Activated T-helper 1 cell treated with anti-CD3 and anti-CD28 coated beads, Interleukin-12 subunit alpha, Interleukin-12 subunit beta, Interleukin-2, Interleukin-4 antibody, amounts not matched to agents 30 ng/mL and 10 ng/mL and 1 ng/mL, durations not matched to agents 14 hours and 24 hours and 36 hours (primary cell): ENCODE measurements at regions of chr4 and their contacts with region 1.

Region 1: GRCh38 chr4:52028969-52029368 is 8.8 kb upstream of the LRRC66 start:
- DNase-seq: no peak
- H3K4me3 Mint-ChIP-seq: no peak overlapping the region
- H3K27ac Mint-ChIP-seq: no peak overlapping the region
- H3K4me1 Mint-ChIP-seq: no peaks in the 10 kb centered on the region
- H3K27me3 Mint-ChIP-seq: no peaks in the 10 kb centered on the region

Region 2: GRCh38 chr4:51831133-51831532 is 197.8 kb before region 1 on chr4:
- intact Hi-C with region 1: loop called (anchors 1 kb)
- DNase-seq: peak; percentile 26
- H3K4me3 Mint-ChIP-seq: no peak overlapping the region
- H3K27ac Mint-ChIP-seq: no peak overlapping the region
- H3K4me1 Mint-ChIP-seq: no peaks in the 10 kb centered on the region
- H3K27me3 Mint-ChIP-seq: peaks cover 13% of the 10 kb centered on the region

Region 3: DNA sequence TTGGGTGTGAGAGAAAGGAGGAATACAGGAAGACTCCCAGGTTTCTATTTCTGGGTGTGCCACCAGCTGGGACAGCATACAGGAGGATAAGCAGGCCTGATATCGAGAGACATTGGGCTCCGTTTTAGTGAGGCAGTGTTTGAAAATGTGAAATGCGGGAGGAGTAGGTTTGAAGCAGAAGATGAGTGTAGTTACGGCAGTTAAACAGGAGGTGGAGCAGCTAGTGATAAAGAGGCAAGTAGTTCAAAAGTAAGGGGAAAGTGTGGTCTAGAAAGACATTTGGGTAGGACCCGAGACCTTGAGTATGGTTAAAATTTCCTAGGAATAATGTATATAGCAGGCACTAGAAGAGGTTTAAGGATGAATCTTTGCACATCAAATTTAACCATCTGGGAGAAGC is 143.6 kb before region 1 on chr4:
- intact Hi-C with region 1: loop called (anchors 1 kb)
- DNase-seq: no peak
- H3K4me3 Mint-ChIP-seq: no peak overlapping the region
- H3K27ac Mint-ChIP-seq: no peak overlapping the region
- H3K4me1 Mint-ChIP-seq: no peaks in the 10 kb centered on the region
- H3K27me3 Mint-ChIP-seq: no peaks in the 10 kb centered on the region

Region 4: DNA sequence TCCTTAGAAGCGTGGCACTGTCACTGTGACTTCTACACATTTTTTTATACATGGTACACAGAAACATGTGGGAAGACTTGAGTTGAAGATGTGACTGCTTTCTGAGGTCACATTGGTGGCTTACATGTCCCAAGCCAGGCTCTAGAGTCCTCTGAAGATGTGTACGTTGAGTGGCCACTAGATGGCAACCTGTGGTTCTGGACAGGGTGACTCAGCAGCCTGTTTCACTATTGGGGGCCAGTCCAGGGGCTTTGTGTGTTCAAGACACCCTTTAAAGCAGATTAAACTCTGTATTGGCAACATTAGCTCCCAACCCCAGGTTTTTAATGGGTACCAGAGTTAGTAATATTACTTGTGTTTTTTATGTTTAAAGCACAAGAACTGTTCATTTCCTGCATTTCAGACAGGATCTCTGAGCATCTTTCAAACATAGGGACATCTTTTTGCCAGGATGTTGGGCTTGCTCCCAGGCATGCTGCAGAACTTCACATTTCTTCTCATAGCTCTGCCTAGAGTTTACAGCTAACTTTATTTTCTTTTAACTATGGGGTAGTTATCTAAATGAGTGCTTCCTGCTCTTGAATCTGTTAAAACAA is 133.1 kb before region 1 on chr4:
- intact Hi-C with region 1: loop called (anchors 2 kb)
- DNase-seq: peak; percentile 27
- H3K4me3 Mint-ChIP-seq: no peak overlapping the region
- H3K27ac Mint-ChIP-seq: peak overlapping the region; percentile 37
- H3K4me1 Mint-ChIP-seq: peaks cover 22% of the 10 kb centered on the region
- H3K27me3 Mint-ChIP-seq: no peaks in the 10 kb centered on the region